ENCODE measurements at regions of chr14 and their contacts with region 1.

Region 1: GRCh38 chr14:34496679-34497513 is 34.9 kb upstream of the SPTSSA start:
- DNase-seq: peak; percentile 86
- H3K4me3 ChIP-seq: no peak overlapping the region
- H3K27ac ChIP-seq: peak overlapping the region; percentile 88
- H3K4me1 ChIP-seq: no peaks in the 10 kb centered on the region
- H3K27me3 ChIP-seq: no peaks in the 10 kb centered on the region
- CTCF ChIP-seq: no peak

Region 2: DNA sequence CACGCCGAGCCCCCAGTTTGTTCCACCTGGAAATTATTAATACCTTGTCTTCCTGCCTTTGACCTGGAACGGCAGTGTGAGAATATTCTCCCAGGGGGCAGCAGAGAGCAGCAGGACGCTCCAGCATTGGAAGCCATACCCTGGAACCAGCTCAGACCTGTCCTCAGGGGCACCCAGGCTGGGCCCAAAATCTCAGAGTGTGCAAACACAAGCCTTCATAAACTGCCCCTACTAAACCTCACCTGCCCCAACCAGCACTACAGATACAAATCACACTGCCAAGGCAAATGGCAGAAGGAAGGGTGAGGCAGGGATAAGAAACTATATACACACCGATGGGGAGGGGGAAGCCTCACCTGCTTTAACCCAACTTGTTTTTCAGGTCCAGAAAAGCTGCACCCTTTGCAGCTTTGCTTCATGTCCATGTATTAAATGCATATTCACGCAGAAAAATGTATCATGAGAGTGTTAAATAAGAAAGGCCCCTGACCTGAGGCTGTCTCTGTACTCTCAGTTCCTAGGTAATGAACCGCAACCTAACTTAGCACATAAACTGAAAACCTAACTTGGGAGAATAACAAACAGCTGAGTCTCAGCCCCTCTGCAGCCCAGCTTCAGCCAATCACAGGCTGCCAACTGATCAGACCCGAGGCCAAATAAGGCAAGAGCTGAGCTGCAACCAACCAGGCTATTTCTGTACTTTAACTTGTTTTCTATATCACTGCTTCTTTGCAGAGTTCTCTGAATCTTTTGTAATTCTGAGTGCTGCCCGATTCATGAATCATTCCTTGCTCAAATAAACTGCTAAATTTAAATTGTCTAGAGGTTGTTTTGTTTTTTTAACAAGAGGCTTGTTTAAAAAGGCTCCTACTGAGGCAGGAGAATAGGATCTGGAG is 164.9 kb before region 1 on chr14:
- intact Hi-C with region 1: loop called (anchors 2 kb)
- DNase-seq: peak; percentile 94
- H3K4me3 ChIP-seq: no peak overlapping the region
- H3K27ac ChIP-seq: peak overlapping the region; percentile 74
- H3K4me1 ChIP-seq: no peaks in the 10 kb centered on the region
- H3K27me3 ChIP-seq: no peaks in the 10 kb centered on the region
- CTCF ChIP-seq: peak; percentile 76

Region 3: DNA sequence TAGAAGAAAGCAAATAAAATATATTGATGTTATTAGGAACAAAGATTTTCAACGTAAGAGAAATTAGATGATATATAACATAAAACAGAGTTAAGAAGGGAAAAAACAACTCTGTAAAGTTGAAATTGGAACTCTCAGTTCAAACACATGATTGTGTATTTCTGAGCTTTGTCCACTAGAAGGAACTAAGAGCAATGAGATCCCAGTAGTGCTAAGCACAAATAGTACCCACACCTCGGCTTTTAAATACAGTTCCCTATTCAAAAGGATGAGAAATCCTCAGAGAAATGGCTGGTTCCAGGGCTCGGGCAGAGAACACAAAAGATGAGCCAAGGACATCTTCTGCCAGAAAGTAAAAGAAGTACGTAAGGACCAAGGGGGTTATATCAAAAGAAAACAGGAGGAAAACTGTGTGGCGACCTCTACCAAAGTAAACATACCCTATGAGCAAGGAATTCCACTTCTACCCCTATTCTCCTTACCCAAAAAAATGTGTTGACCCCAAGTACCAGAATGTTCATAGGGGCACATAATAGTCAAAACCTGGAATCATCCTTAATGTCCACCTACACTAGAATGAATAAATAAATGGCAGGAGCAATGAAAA is 131.5 kb before region 1 on chr14:
- intact Hi-C with region 1: loop called (anchors 5 kb)
- DNase-seq: no peak
- H3K4me3 ChIP-seq: no peak overlapping the region
- H3K27ac ChIP-seq: no peak overlapping the region
- H3K4me1 ChIP-seq: no peaks in the 10 kb centered on the region
- H3K27me3 ChIP-seq: no peaks in the 10 kb centered on the region
- CTCF ChIP-seq: no peak

Measured in colonic mucosa (tissue), 4 donors.